Transverse colon (tissue), 4 donors: ENCODE measurements at regions of chr16 and their contacts with region 1.

Region 1: GRCh38 chr16:63512910-63513309 is 1476.7 kb upstream of the CDH8 start:
- DNase-seq: no peak
- H3K4me3 ChIP-seq: no peak overlapping the region
- H3K27ac ChIP-seq: no peak overlapping the region
- H3K4me1 ChIP-seq: no peaks in the 10 kb centered on the region
- H3K27me3 ChIP-seq: no peaks in the 10 kb centered on the region
- CTCF ChIP-seq: no peak
- EP300 ChIP-seq: no peak
- POLR2A ChIP-seq: no peak

Region 2: GRCh38 chr16:63216696-63217423 is 296.1 kb before region 1 on chr16:
- in situ Hi-C with region 1: no loop called
- intact Hi-C with region 1: no loop called
- DNase-seq: no peak
- H3K4me3 ChIP-seq: no peak overlapping the region
- H3K27ac ChIP-seq: no peak overlapping the region
- H3K4me1 ChIP-seq: no peaks in the 10 kb centered on the region
- H3K27me3 ChIP-seq: no peaks in the 10 kb centered on the region
- CTCF ChIP-seq: no peak
- EP300 ChIP-seq: no peak
- POLR2A ChIP-seq: no peak

Region 3: GRCh38 chr16:63458846-63459245 is 54.1 kb before region 1 on chr16:
- in situ Hi-C with region 1: loop called in 1 of 4 experiments (anchors 10 kb)
- intact Hi-C with region 1: no loop called
- DNase-seq: no peak
- H3K4me3 ChIP-seq: no peak overlapping the region
- H3K27ac ChIP-seq: no peak overlapping the region
- H3K4me1 ChIP-seq: no peaks in the 10 kb centered on the region
- H3K27me3 ChIP-seq: no peaks in the 10 kb centered on the region
- CTCF ChIP-seq: no peak
- EP300 ChIP-seq: no peak
- POLR2A ChIP-seq: no peak

Region 4: GRCh38 chr16:63481060-63481459 is 31.9 kb before region 1 on chr16:
- in situ Hi-C with region 1: no loop called
- intact Hi-C with region 1: no loop called
- DNase-seq: no peak
- H3K4me3 ChIP-seq: no peak overlapping the region
- H3K27ac ChIP-seq: no peak overlapping the region
- H3K4me1 ChIP-seq: no peaks in the 10 kb centered on the region
- H3K27me3 ChIP-seq: no peaks in the 10 kb centered on the region
- CTCF ChIP-seq: no peak
- EP300 ChIP-seq: no peak
- POLR2A ChIP-seq: no peak

Region 5: GRCh38 chr16:63581570-63581969 is 68.7 kb after region 1 on chr16:
- in situ Hi-C with region 1: no loop called
- intact Hi-C with region 1: no loop called
- DNase-seq: no peak
- H3K4me3 ChIP-seq: no peak overlapping the region
- H3K27ac ChIP-seq: no peak overlapping the region
- H3K4me1 ChIP-seq: no peaks in the 10 kb centered on the region
- H3K27me3 ChIP-seq: no peaks in the 10 kb centered on the region
- CTCF ChIP-seq: no peak
- EP300 ChIP-seq: no peak
- POLR2A ChIP-seq: no peak